ENCODE measurements at regions of chr5 and their contacts with region 1.

Region 1: DNA sequence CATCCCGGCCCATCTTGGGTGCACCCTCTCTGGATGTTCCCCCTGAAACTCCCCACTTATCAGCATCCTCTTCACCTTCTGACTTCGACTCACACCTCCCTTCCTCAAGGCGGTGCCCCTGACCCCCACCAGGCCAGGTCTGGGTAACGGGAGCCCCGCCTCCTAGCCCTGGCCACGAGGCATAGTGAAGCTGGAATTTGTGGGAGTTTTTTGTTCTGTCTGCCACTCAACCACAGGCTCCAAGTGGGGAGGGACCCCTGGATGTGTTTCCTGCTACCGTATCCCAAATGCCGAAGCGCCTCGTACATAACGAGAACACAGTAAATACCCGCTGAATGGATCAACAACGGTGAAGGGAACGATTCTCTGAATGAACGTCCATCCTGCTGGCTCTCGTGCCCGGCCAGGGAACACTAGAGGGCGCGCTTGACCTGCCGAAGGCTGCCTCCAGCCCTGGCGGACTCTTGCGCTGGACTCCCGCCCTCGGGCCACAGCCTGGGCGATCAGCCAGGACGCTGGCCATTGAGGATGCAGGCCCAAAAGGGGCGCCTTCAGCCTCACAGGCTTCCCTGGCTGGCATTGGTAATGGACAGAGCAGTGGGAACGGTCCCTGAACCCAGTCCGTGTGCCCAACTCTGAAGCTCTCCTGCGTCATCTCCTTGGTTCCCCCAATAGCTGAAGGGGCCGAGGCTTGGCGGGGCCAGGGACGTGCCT is 47.3 kb upstream of the PHYKPL start:
- DNase-seq: peak; percentile 63 to 88
- H3K4me3 ChIP-seq: peak overlapping the region in 1 of 3 donors; percentile 32
- H3K27ac ChIP-seq: no peak overlapping the region
- H3K4me1 ChIP-seq: no peaks in the 10 kb centered on the region
- H3K27me3 ChIP-seq: peaks cover 0 to 23% of the 10 kb centered on the region in 2 donors
- CTCF ChIP-seq: peak; percentile 21 to 81 (median 79)
- POLR2A ChIP-seq: no peak

Region 2: GRCh38 chr5:178564397-178564796 is 284.5 kb after region 1 on chr5:
- intact Hi-C with region 1: loop called (anchors 10 kb)
- DNase-seq: no peak
- H3K4me3 ChIP-seq: no peak overlapping the region
- H3K27ac ChIP-seq: no peak overlapping the region
- H3K4me1 ChIP-seq: no peaks in the 10 kb centered on the region
- H3K27me3 ChIP-seq: no peaks in the 10 kb centered on the region
- CTCF ChIP-seq: no peak
- POLR2A ChIP-seq: no peak

Region 3: DNA sequence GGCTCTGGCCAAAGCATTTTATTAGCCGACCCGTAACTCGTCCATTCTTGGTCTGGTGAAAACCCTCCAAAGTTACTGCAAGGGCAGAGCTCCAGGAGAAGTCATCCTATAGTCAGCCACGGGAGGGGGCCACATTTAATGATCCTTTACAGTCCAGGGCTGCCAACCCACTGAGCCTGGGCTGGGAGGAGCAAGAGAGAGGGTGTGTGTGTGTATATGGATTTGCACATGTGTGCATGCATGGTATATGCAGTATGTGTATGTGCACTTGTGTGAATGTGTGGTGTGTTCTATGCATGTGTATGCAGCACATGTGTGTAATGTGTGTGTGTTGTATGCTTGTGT is 1933.3 kb after region 1 on chr5:
- intact Hi-C with region 1: no loop called
- DNase-seq: no peak
- H3K4me3 ChIP-seq: no peak overlapping the region
- H3K27ac ChIP-seq: no peak overlapping the region
- H3K4me1 ChIP-seq: no peaks in the 10 kb centered on the region
- H3K27me3 ChIP-seq: peaks cover 0 to 20% of the 10 kb centered on the region in 2 donors
- CTCF ChIP-seq: no peak
- POLR2A ChIP-seq: no peak

Measured in breast epithelium (tissue), 4 donors.